ENCODE measurements at regions of chr1 and their contacts with region 1.

Region 1: GRCh38 chr1:111769517-111770146 is 13.9 kb downstream of the DDX20 start:
- DNase-seq: peak in 3 of 5 donors; percentile 20 to 68 (median 46)
- H3K4me3 ChIP-seq: no peak overlapping the region
- H3K27ac ChIP-seq: no peak overlapping the region
- H3K4me1 ChIP-seq: no peaks in the 10 kb centered on the region
- H3K27me3 ChIP-seq: no peaks in the 10 kb centered on the region
- CTCF ChIP-seq: peak; percentile 82 to 91 (median 83)
- EP300 ChIP-seq: no peak
- POLR2A ChIP-seq: no peak

Region 2: DNA sequence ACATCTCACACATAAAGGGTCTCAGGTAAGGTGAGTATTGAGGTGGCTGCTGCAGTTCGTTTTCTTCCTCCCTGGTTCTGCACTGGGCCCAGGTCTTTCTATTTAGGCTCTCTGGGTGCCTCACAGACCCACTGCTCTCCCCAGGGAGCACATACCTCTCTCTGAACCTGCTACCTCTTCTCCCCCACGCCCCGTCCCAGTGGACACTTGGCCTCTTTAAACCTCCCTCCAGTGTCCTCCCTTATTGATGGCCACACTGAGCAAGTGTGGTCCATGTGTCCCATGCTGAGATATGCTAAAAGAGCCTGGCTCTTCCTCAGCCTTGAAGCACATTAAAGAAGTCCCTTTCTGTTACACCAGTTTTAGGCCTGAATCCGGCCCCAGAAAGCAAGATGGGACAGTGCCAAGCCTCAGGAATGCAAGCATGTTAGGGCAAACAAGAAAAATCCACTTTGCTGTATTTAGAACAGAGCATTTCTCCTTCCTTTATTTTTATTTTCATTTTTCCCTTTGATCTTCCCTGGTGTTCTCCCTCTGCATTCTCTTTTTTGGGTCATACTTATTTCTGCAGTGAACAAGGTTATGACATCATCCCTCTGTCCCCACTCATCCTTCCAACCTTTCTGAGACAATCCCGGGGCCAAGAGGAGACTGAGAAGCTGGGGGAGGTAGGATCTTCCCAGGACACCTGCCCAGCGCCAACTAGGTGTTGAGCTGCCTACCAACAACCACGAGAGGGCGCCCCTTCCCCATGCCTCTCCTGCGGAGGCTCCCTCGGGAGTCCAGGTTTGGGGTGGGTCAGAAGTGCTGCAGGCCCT is 547.1 kb before region 1 on chr1:
- intact Hi-C with region 1: loop called in 1 of 4 experiments (anchors 10 kb)
- DNase-seq: peak; percentile 59 to 77 (median 73)
- H3K4me3 ChIP-seq: no peak overlapping the region
- H3K27ac ChIP-seq: no peak overlapping the region
- H3K4me1 ChIP-seq: no peaks in the 10 kb centered on the region
- H3K27me3 ChIP-seq: no peaks in the 10 kb centered on the region
- CTCF ChIP-seq: peak; percentile 58 to 67 (median 63)
- EP300 ChIP-seq: no peak
- POLR2A ChIP-seq: no peak

Region 3: DNA sequence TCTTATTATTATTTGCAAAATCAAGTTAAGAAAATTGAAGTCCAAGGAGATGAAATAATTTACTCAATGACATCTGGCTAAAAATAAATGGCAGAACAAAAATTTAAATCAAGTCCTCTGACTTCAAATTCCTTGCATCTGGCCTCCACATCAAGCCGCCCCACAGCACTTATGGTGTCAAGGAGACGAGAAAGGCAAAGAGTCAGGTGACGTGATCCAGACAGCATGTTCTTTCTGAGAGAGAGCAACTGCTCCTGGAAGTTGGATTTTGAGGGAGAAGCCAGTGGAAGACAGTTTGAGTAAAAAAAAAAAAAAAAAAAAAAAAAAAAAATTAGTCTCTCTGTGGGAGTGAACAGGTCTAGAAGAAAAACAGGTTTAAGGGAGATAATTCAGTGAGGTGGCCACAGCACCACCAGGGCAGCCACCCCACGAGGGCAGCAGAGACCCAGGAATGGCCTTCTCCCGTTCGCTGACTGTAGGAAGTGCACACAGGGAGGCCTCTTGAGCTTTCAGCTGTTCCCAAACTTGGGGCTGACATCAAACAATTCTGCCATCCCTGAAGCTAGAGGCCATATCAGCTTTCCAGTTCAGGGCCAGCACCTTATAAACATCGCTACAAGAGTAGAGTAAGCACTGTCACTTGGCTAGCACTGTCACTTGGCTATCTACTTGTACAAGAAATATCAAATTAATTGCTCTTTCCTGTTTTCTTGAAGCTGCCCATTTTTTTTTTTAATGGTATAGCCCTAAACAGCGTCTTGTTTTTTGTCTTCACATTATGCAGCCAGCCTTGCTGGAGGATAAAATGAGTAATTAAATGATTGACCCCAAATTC is 288.0 kb before region 1 on chr1:
- intact Hi-C with region 1: loop called in 2 of 4 experiments (anchors 5 kb)
- DNase-seq: peak; percentile 74 to 86 (median 79)
- H3K4me3 ChIP-seq: no peak overlapping the region
- H3K27ac ChIP-seq: peak overlapping the region in 1 of 2 donors; percentile 17
- H3K4me1 ChIP-seq: peaks cover 1% of the 10 kb centered on the region
- H3K27me3 ChIP-seq: no peaks in the 10 kb centered on the region
- CTCF ChIP-seq: peak; percentile 52 to 64 (median 56)
- EP300 ChIP-seq: no peak
- POLR2A ChIP-seq: no peak

Region 4: GRCh38 chr1:111856411-111857185 is 87.0 kb after region 1 on chr1:
- intact Hi-C with region 1: no loop called
- DNase-seq: no peak
- H3K4me3 ChIP-seq: no peak overlapping the region
- H3K27ac ChIP-seq: no peak overlapping the region
- H3K4me1 ChIP-seq: no peaks in the 10 kb centered on the region
- H3K27me3 ChIP-seq: no peaks in the 10 kb centered on the region
- CTCF ChIP-seq: no peak
- EP300 ChIP-seq: no peak
- POLR2A ChIP-seq: no peak